Activated naive CD4-positive, alpha-beta T cell treated with anti-CD3 and anti-CD28 coated beads for 36 hours (primary cell): ENCODE measurements at regions of chr6 and their contacts with region 1.

Region 1: DNA sequence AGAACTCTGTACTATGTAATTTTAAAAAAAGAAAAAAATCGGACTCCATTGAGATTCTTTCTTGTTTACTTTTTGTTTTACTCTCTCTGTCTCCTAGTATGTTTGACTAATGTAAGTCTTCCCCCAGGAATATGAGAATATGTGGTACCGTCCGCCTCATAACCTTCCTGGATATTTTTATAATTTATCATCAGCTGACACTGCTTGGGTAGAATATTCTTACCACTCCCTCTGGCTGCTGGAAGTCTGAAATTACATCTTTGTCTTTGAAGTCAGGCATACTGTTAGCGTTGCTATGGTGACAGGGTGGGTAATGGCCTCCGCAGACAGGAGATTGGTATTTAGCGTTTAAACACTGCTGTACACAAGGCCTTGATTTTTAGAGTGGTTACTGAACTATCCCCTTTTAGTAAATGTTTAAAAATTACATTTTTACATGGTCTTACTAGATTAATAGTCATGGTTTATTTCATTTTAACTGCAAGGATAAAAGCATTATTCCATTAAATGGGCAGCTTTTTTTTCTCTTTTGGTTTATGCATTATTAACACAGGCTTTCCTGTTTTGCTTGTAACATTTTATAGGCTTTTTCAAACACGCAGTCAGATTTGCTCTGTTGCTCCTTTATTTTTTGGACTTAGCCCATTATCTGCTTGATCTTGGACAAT is 176.4 kb downstream of the ARID1B start:
- DNase-seq: peak; percentile 61
- H3K4me3 Mint-ChIP-seq: no peak overlapping the region
- H3K27ac Mint-ChIP-seq: no peak overlapping the region
- H3K4me1 Mint-ChIP-seq: peaks cover 52% of the 10 kb centered on the region
- H3K27me3 Mint-ChIP-seq: no peaks in the 10 kb centered on the region

Region 2: GRCh38 chr6:156564127-156564806 is 389.3 kb before region 1 on chr6:
- CTCF ChIA-PET with region 1: no interaction called
- intact Hi-C with region 1: loop called (anchors 1 kb)
- DNase-seq: peak; percentile 86
- H3K4me3 Mint-ChIP-seq: no peak overlapping the region
- H3K27ac Mint-ChIP-seq: no peak overlapping the region
- H3K4me1 Mint-ChIP-seq: peaks cover 5% of the 10 kb centered on the region
- H3K27me3 Mint-ChIP-seq: peaks cover 2% of the 10 kb centered on the region

Region 3: DNA sequence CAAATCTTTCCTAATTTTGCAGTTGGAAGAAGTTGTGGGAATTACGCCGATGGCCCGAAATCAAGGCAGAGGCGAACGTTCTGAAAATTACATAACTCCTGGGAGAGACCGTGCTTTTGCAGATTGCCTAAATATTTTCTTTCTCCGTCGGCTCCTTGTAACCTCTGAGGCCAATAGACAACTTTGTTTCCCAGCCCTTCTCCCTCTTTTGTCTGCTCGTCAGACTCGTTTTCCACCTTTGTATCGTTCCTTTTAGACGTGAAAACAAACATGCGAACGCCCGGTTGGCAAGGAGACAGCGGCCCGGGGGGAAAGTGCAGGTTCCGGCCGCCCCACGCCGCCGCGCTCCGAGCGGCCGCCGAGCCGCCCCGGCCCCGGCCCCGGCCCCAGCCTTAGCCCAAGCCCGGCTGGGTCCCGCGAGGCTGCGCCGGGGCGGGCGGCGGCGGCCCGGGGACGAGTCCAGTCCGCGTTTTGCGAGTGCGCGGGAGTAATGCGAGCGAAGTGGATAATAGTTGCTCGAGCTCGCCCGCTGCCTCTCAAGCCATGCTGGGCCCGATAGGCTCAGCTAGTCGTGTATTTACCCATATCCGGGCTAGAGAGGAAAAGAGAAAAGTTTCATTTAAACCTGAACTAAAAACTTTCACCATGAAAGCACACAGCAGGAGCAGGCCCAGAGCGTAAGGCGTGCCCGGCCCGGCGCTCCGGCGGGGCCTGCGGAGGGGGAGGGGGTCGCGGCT is 176.6 kb before region 1 on chr6 and contains the start of gene ARID1B:
- CTCF ChIA-PET with region 1: no interaction called
- intact Hi-C with region 1: loop called (anchors 2 kb)
- DNase-seq: peak; percentile 71
- H3K4me3 Mint-ChIP-seq: peak within 1 kb of the TSS; percentile 87
- H3K27ac Mint-ChIP-seq: peak within 1 kb of the TSS; percentile 99
- H3K4me1 Mint-ChIP-seq: peaks cover 14% of the 10 kb centered on the region
- H3K27me3 Mint-ChIP-seq: no peaks in the 10 kb centered on the region
- total RNA-seq, gene ARID1B: 42.5 to 43.2 TPM

Region 4: GRCh38 chr6:156857573-156857972 is 96.0 kb before region 1 on chr6:
- CTCF ChIA-PET with region 1: no interaction called
- intact Hi-C with region 1: loop called (anchors 1 kb)
- DNase-seq: peak; percentile 57
- H3K4me3 Mint-ChIP-seq: no peak overlapping the region
- H3K27ac Mint-ChIP-seq: peak overlapping the region; percentile 89
- H3K4me1 Mint-ChIP-seq: peaks cover 77% of the 10 kb centered on the region
- H3K27me3 Mint-ChIP-seq: no peaks in the 10 kb centered on the region

Region 5: DNA sequence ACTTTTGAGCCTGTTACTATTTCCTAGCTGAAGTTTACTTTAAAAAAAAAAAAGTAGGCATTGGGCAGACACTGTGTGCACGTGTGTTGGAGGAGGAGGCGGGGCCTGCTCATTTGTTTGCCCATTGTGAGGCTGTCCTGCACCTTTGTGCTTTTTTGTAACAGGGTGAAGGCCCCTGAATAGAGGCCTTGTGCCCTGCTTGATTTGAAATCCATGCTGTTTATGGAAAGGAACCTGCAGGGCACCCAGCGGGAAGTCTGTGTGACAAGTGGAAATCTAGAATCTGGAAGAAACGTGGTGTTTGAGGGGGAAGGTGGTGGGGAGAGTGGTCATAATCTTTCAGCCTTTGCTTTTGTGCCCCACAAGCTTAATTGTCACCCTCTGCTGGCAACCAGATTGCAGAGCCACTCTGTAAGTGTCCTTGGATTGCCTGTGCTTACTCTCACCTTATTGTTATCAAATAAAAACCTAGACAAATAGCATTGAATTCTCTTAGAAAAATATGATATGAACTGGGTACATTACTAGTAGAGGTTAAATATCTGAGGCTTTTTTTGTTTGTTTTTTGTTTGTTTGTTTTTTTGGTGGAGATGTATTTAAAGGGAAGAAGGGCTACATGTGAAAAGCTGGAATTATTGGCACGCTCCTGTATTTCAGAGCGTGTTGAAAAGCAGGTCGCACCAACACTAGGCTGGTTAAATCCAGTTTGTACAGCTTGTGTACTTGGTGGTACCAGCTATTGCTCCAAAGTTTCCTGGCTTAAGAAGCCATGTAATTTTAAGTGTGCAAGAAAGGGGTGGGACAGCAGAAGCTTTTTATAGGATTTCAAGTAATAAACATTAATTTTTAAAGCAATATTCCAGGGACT is 20.2 kb before region 1 on chr6:
- CTCF ChIA-PET with region 1: no interaction called
- intact Hi-C with region 1: loop called (anchors 1 kb)
- DNase-seq: no peak
- H3K4me3 Mint-ChIP-seq: no peak overlapping the region
- H3K27ac Mint-ChIP-seq: no peak overlapping the region
- H3K4me1 Mint-ChIP-seq: peaks cover 60% of the 10 kb centered on the region
- H3K27me3 Mint-ChIP-seq: no peaks in the 10 kb centered on the region

Region 6: DNA sequence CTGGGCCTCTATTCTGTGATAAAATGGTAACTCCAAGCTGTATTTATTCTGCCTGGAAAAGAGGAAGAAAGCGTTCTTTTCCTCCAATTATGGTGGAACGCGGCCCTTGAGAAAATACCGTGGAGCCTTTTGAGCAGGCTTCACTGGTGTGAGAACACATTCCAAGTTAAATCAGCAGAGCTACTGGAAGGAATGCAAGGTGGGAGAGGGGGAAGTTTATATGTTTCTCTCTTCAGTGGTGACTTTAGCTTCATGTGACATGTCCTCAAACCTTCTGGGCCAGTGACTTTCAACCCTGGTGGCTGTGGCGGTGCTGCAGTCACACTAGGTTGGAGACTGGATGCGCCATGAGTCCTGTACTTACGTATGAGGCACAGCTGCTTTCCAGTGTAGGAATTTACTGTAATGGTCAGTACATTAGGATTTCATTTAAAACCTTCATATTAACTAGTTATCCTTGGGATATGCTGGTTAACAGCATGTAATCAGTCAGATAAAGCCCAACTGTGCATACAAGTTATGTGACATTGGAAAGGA is 45.2 kb after region 1 on chr6:
- CTCF ChIA-PET with region 1: no interaction called
- intact Hi-C with region 1: no loop called
- DNase-seq: no peak
- H3K4me3 Mint-ChIP-seq: no peak overlapping the region
- H3K27ac Mint-ChIP-seq: no peak overlapping the region
- H3K4me1 Mint-ChIP-seq: peaks cover 46% of the 10 kb centered on the region
- H3K27me3 Mint-ChIP-seq: no peaks in the 10 kb centered on the region

Region 7: GRCh38 chr6:157021344-157021992 is 67.9 kb after region 1 on chr6:
- CTCF ChIA-PET with region 1: no interaction called
- intact Hi-C with region 1: loop called (anchors 1 kb)
- DNase-seq: peak; percentile 90
- H3K4me3 Mint-ChIP-seq: peak overlapping the region; percentile 92
- H3K27ac Mint-ChIP-seq: peak overlapping the region; percentile 99
- H3K4me1 Mint-ChIP-seq: peaks cover 64% of the 10 kb centered on the region
- H3K27me3 Mint-ChIP-seq: no peaks in the 10 kb centered on the region

Region 8: GRCh38 chr6:157099912-157100593 is 146.4 kb after region 1 on chr6:
- CTCF ChIA-PET with region 1: no interaction called
- intact Hi-C with region 1: loop called (anchors 2 kb)
- DNase-seq: peak; percentile 80
- H3K4me3 Mint-ChIP-seq: no peak overlapping the region
- H3K27ac Mint-ChIP-seq: peak overlapping the region; percentile 84
- H3K4me1 Mint-ChIP-seq: peaks cover 55% of the 10 kb centered on the region
- H3K27me3 Mint-ChIP-seq: no peaks in the 10 kb centered on the region

Region 9: DNA sequence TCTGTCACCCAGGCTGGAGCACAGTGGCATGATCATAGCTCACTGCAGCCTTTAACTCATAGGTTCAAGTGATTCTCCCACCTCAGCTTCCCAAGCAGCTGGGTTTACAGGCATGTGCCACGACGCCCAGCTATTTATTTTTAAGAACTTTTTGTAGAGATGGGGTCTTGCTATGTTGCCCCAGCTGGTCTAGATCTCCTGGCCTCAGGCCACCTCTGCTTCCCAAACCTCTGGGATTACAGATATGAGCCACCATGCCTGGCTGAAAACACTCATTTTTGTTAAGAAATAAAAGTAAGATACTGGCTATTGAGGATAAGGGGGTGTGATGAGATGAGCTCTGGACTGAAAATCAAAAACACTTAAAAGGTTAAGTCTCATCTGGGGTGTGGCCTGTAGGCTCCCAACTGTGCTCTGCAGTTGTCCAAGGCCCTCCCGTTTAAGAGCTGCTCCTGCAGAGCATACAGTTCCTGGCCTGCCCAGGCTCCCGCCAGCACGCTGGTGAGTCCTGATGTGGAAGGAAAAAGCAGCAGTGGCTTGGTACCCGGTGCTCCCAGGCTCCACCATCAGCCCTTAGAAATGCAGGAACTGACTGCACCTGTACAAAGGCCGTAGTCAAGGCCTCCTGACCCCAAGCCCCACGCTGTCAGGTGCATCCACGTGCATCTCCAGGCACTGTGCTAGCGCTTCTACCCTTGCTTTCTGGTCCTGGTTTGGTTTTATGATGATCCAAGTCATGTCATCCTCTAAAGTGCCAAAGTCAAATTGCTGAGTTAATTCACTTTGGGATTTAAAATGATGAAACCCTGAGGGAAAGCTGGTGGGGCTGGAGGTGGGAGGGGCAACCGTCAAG is 258.2 kb after region 1 on chr6:
- CTCF ChIA-PET with region 1: no interaction called
- intact Hi-C with region 1: no loop called
- DNase-seq: no peak
- H3K4me3 Mint-ChIP-seq: no peak overlapping the region
- H3K27ac Mint-ChIP-seq: no peak overlapping the region
- H3K4me1 Mint-ChIP-seq: peaks cover 2% of the 10 kb centered on the region
- H3K27me3 Mint-ChIP-seq: no peaks in the 10 kb centered on the region